MCF 10A (cell line): ENCODE measurements at regions of chr11 and their contacts with region 1.

Region 1: GRCh38 chr11:63738720-63739360 is 29.7 kb downstream of the ZFTA start:
- DNase-seq: peak; percentile 80
- H3K4me3 Mint-ChIP-seq: no peak overlapping the region
- H3K27ac Mint-ChIP-seq: no peak overlapping the region
- H3K4me1 Mint-ChIP-seq: peaks cover 5% of the 10 kb centered on the region
- H3K27me3 Mint-ChIP-seq: no peaks in the 10 kb centered on the region
- CTCF ChIP-seq: peak; percentile 84

Region 2: GRCh38 chr11:63635762-63636465 is 102.9 kb before region 1 on chr11:
- CTCF ChIA-PET with region 1: interaction called, 127 read pairs
- POLR2A ChIA-PET with region 1: interaction called, 4 read pairs
- intact Hi-C with region 1: loop called (anchors 1 kb)
- DNase-seq: peak; percentile 66
- H3K4me3 Mint-ChIP-seq: no peak overlapping the region
- H3K27ac Mint-ChIP-seq: no peak overlapping the region
- H3K4me1 Mint-ChIP-seq: peaks cover 6% of the 10 kb centered on the region
- H3K27me3 Mint-ChIP-seq: no peaks in the 10 kb centered on the region
- CTCF ChIP-seq: peak; percentile 71

Region 3: GRCh38 chr11:63671322-63672155 is 67.3 kb before region 1 on chr11 and contains the start of gene ATL3:
- CTCF ChIA-PET with region 1: interaction called, 28 read pairs
- POLR2A ChIA-PET with region 1: interaction called, 12 read pairs
- intact Hi-C with region 1: loop called (anchors 1 kb)
- DNase-seq: peak; percentile 98
- H3K4me3 Mint-ChIP-seq: peak within 1 kb of the TSS; percentile 84
- H3K27ac Mint-ChIP-seq: peak within 1 kb of the TSS; percentile 90
- H3K4me1 Mint-ChIP-seq: peaks cover 27% of the 10 kb centered on the region
- H3K27me3 Mint-ChIP-seq: no peaks in the 10 kb centered on the region
- CTCF ChIP-seq: no peak
- total RNA-seq, gene ATL3: 74.0 and 77.1 TPM in 2 replicates

Region 4: GRCh38 chr11:63749624-63750023 is 10.8 kb after region 1 on chr11:
- CTCF ChIA-PET with region 1: interaction called, 12 read pairs
- POLR2A ChIA-PET with region 1: interaction called, 5 read pairs
- intact Hi-C with region 1: no loop called
- DNase-seq: no peak
- H3K4me3 Mint-ChIP-seq: no peak overlapping the region
- H3K27ac Mint-ChIP-seq: no peak overlapping the region
- H3K4me1 Mint-ChIP-seq: no peaks in the 10 kb centered on the region
- H3K27me3 Mint-ChIP-seq: no peaks in the 10 kb centered on the region
- CTCF ChIP-seq: no peak

Region 5: GRCh38 chr11:63993993-63994392 is 255.2 kb after region 1 on chr11:
- CTCF ChIA-PET with region 1: no interaction called
- POLR2A ChIA-PET with region 1: no interaction called
- intact Hi-C with region 1: no loop called
- DNase-seq: no peak
- H3K4me3 Mint-ChIP-seq: no peak overlapping the region
- H3K27ac Mint-ChIP-seq: no peak overlapping the region
- H3K4me1 Mint-ChIP-seq: peaks cover 18% of the 10 kb centered on the region
- H3K27me3 Mint-ChIP-seq: no peaks in the 10 kb centered on the region
- CTCF ChIP-seq: no peak